Tibial artery (tissue), 4 donors: ENCODE measurements at regions of chr12 and their contacts with region 1.

Region 1: DNA sequence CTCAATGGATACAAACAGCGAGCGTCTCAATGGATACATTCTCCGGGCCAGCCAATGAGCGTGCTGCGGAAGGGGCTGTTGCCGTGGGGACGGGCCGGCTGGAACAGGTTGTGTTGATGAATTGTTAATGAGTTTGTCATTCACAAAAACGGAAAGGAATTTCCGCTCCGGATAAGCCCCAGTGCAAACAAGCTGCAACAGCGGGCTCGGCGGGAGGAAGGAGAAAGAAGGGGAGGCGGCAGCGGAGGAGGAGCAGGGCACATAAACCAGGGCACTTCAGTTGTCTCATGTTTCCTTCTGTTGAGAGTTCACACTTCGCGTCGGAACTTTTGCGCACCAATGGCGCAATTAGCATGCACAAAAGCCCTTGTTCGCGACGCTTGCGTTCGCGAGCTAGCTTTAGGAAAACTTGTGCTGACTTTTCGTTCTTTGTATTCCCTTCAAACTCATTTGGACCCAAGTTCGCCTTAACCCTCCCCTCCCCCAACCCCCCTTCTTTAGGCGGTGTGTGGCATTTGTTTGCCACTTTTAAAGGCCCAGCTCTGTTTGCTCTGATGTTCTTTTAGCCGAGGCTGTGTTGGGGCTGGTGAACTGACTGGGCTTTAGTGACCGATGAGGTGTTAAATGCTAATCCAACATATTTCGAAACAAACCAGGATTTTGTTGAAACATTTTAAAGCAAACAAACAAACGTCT is at the start of gene DUSP6:
- DNase-seq: peak; percentile 96 to 97
- H3K4me3 ChIP-seq: peak within 1 kb of the TSS; percentile 74 to 90
- H3K27ac ChIP-seq: peak within 1 kb of the TSS; percentile 95 to 96
- H3K4me1 ChIP-seq: peaks cover 0 to 43% (median 12%) of the 10 kb centered on the region in 4 donors
- H3K27me3 ChIP-seq: no peaks in the 10 kb centered on the region
- CTCF ChIP-seq: no peak

Region 2: GRCh38 chr12:89451841-89452251 is 99.2 kb after region 1 on chr12:
- intact Hi-C with region 1: loop called (anchors 5 kb)
- DNase-seq: peak; percentile 41 to 71
- H3K4me3 ChIP-seq: peak overlapping the region in 1 of 2 donors; percentile 19
- H3K27ac ChIP-seq: peak overlapping the region; percentile 77 to 78
- H3K4me1 ChIP-seq: peaks cover 4 to 45% (median 20%) of the 10 kb centered on the region in 4 donors
- H3K27me3 ChIP-seq: no peaks in the 10 kb centered on the region
- CTCF ChIP-seq: no peak

Region 3: GRCh38 chr12:89709995-89710872 is 357.6 kb after region 1 on chr12:
- intact Hi-C with region 1: loop called (anchors 10 kb)
- DNase-seq: peak; percentile 45 to 84
- H3K4me3 ChIP-seq: peak overlapping the region; percentile 71 to 91
- H3K27ac ChIP-seq: peak overlapping the region; percentile 93 to 95
- H3K4me1 ChIP-seq: peaks cover 0 to 20% (median 5%) of the 10 kb centered on the region in 4 donors
- H3K27me3 ChIP-seq: no peaks in the 10 kb centered on the region
- CTCF ChIP-seq: no peak